HepG2 (cell line): ENCODE measurements at regions of chr6 and their contacts with region 1.

Region 1: GRCh38 chr6:47097092-47097945 is 55.2 kb upstream of the ADGRF1 start:
- DNase-seq: peak; percentile 89
- ATAC-seq: peak; percentile 80
- H3K4me3 ChIP-seq: no peak overlapping the region
- H3K27ac ChIP-seq: no peak overlapping the region
- H3K4me1 ChIP-seq: peaks cover 59% of the 10 kb centered on the region
- H3K27me3 ChIP-seq: no peaks in the 10 kb centered on the region
- CTCF ChIP-seq: peak; percentile 91
- EP300 ChIP-seq: no peak
- POLR2A ChIP-seq: no peak
- RAD21 ChIP-seq: peak; percentile 94

Region 2: DNA sequence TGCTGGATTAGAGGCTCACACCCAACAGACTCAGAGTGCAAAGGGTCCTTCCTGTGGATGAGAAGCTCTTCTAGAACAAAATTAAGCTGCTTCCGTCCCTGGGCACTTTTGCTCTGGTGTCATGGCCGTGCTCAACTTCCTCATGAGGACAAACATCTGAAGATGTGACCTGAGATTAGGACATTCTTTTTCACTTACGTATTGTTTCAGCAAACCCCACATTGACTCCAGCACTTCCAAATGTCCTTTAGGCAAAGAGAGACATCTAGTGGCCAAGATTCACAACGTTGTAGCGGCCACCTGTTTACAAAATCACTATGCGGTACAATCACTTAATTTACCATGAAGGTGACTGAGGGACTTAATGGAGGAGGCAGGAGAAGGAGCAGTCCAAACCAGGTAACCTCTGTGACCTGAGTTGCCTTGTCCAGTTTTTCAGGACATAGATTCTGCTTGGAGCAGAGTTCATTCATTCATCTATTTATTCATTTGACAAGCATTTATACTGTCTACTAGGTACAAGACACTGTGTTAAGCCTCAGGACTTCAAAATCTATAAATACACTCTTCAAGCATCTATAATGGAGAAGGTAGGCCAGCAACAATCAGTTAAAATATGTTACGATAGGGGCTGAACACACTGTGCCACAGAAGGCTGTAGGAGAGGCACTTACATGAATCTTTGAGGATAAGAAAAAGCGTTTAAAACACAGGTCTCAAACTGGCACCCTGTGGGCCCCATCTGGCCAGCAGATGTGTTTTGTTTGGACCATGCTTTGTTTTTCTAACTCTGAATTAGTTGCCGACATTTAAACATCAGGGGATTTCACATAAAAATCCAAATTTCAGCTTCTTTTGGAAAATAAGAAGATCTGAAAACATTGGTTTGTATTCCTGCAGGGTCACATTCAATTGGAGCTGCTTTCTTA is 49.6 kb before region 1 on chr6:
- CTCF ChIA-PET with region 1: interaction called, 3 read pairs
- POLR2A ChIA-PET with region 1: no interaction called
- in situ Hi-C with region 1: no loop called
- intact Hi-C with region 1: loop called (anchors 1 kb)
- DNase-seq: peak; percentile 95
- ATAC-seq: peak; percentile 97
- H3K4me3 ChIP-seq: peak overlapping the region in 1 of 3 experiments; percentile 26; a peak in 1 of 6 replicates
- H3K27ac ChIP-seq: no peak overlapping the region
- H3K4me1 ChIP-seq: peaks cover 28% of the 10 kb centered on the region
- H3K27me3 ChIP-seq: peaks cover 2 to 4% of the 10 kb centered on the region in 2 experiments; a peak in 2 of 5 replicates
- CTCF ChIP-seq: peak; percentile 96
- EP300 ChIP-seq: peak in 1 of 2 experiments; percentile 31; a peak in 1 of 4 replicates
- POLR2A ChIP-seq: no peak
- RAD21 ChIP-seq: peak; percentile 82

Region 3: DNA sequence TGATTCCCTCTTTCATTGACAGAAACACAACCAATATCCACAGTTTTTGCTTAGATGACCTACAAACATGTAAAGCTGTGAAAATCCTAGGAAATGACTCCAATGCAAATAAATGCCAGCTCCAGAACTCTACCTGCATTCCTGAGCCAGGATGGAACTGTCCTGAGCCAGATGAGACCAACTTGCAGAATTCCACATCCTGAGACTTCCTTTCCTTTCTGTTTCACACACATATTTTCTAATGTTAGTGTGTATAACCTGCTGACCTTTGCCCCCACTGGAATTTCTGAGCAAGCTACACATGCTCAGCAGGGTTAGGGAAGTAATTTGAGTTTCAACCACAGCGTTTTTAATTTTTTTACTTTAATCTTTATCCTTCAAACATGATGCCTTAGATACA is 14.4 kb after region 1 on chr6:
- CTCF ChIA-PET with region 1: no interaction called
- POLR2A ChIA-PET with region 1: interaction called, 3 read pairs
- in situ Hi-C with region 1: no loop called
- intact Hi-C with region 1: loop called (anchors 2 kb)
- DNase-seq: peak; percentile 93
- ATAC-seq: peak; percentile 79
- H3K4me3 ChIP-seq: peak overlapping the region in 1 of 3 experiments; percentile 15; a peak in 1 of 6 replicates
- H3K27ac ChIP-seq: peak overlapping the region; percentile 4
- H3K4me1 ChIP-seq: peaks cover 44% of the 10 kb centered on the region
- H3K27me3 ChIP-seq: no peaks in the 10 kb centered on the region
- CTCF ChIP-seq: no peak
- EP300 ChIP-seq: peak in 1 of 2 experiments; percentile 54; a peak in 1 of 4 replicates
- POLR2A ChIP-seq: no peak
- RAD21 ChIP-seq: no peak

Region 4: GRCh38 chr6:47188588-47189021 is 91.3 kb after region 1 on chr6:
- CTCF ChIA-PET with region 1: no interaction called
- POLR2A ChIA-PET with region 1: interaction called, 3 read pairs
- in situ Hi-C with region 1: no loop called
- intact Hi-C with region 1: loop called (anchors 1 kb)
- DNase-seq: peak; percentile 95
- ATAC-seq: peak; percentile 89
- H3K4me3 ChIP-seq: no peak overlapping the region
- H3K27ac ChIP-seq: peak overlapping the region; percentile 65
- H3K4me1 ChIP-seq: peaks cover 31% of the 10 kb centered on the region
- H3K27me3 ChIP-seq: no peaks in the 10 kb centered on the region
- CTCF ChIP-seq: no peak
- EP300 ChIP-seq: peak in 1 of 2 experiments; percentile 87; a peak in 2 of 4 replicates
- POLR2A ChIP-seq: no peak
- RAD21 ChIP-seq: no peak

Region 5: DNA sequence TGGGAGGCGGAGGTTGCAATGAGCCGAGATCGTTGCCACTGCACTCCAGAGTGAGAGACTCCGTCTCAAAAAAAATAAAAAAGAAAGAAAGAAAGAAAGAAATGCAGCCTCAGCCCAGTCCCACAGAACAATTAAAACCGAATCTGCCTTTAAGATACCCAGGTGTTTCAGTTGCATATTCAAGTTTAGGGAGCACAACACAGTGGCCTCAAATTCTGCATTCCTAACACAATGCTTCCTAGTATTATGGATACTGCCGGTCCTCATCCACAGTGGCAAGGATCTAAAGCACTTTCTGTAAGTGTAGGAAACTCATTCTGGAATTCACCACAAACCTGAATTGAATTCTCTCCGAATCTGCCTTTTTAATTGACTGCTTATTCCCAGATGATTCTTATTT is 131.9 kb after region 1 on chr6:
- CTCF ChIA-PET with region 1: no interaction called
- POLR2A ChIA-PET with region 1: no interaction called
- in situ Hi-C with region 1: loop called (anchors 10 kb)
- intact Hi-C with region 1: loop called (anchors 2 kb)
- DNase-seq: no peak
- ATAC-seq: no peak
- H3K4me3 ChIP-seq: no peak overlapping the region
- H3K27ac ChIP-seq: no peak overlapping the region
- H3K4me1 ChIP-seq: peaks cover 18% of the 10 kb centered on the region
- H3K27me3 ChIP-seq: no peaks in the 10 kb centered on the region
- CTCF ChIP-seq: no peak
- EP300 ChIP-seq: no peak
- POLR2A ChIP-seq: no peak
- RAD21 ChIP-seq: no peak

Region 6: DNA sequence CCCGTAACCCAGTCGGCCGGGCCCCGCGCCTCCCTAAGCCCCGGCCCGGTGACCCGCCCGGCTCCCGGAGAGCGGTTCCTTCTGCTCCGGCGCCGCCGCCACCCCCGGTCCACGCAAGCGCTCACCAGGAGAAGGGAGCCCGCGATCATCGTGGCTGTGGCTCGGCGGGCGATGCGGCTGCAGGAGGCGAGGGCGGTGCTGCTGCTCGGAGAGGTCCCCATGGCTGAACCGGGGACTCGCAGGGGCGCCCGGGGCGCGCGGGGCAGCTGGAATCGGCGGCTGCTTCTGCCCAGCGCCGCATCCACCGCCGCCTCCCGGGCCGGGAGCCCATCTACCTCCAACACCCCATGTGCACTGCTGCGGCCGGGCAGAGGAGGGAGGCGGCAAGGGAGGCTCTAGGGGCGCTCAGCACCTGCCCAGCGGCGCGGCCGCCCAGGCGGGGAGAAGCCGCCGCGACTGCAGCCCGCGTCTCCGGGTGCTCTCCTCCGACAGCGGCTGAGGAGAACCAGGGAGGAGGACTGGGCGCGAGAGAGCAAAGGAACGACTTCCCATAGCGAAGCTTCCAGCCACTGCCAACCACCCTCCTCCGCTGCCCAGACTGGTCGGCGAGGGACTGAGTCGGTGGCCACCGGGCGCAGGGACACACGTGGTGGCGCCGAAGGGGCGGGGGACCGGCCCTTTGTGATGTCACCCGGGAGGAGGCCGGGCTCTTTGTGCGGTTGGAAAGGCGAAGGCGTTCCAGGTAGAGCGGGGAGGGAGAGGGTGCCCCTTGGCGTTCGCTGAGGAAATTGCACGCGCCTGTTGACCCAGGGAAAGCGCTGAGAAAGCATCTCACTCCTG is 212.2 kb after region 1 on chr6 and contains the start of gene TNFRSF21:
- CTCF ChIA-PET with region 1: interaction called, 20 read pairs
- POLR2A ChIA-PET with region 1: interaction called, 15 read pairs
- in situ Hi-C with region 1: loop called (anchors 5 kb)
- intact Hi-C with region 1: loop called (anchors 1 kb)
- DNase-seq: peak; percentile 92
- ATAC-seq: peak; percentile 96
- H3K4me3 ChIP-seq: peak within 1 kb of the TSS; percentile 93 to 98 (median 95)
- H3K27ac ChIP-seq: peak within 1 kb of the TSS; percentile 63
- H3K4me1 ChIP-seq: peaks cover 45% of the 10 kb centered on the region
- H3K27me3 ChIP-seq: peaks cover 0 to 24% of the 10 kb centered on the region in 2 experiments; a peak in 2 of 5 replicates
- CTCF ChIP-seq: peak; percentile 98
- EP300 ChIP-seq: peak in 1 of 2 experiments; percentile 17; a peak in 1 of 4 replicates
- POLR2A ChIP-seq: peak; percentile 95 to 96
- RAD21 ChIP-seq: peak; percentile 98
- total RNA-seq, gene TNFRSF21: 35.4 and 46.3 TPM in 2 replicates